Heart left ventricle (tissue), 16 donors: ENCODE measurements at regions of chr5 and their contacts with region 1.

Region 1: DNA sequence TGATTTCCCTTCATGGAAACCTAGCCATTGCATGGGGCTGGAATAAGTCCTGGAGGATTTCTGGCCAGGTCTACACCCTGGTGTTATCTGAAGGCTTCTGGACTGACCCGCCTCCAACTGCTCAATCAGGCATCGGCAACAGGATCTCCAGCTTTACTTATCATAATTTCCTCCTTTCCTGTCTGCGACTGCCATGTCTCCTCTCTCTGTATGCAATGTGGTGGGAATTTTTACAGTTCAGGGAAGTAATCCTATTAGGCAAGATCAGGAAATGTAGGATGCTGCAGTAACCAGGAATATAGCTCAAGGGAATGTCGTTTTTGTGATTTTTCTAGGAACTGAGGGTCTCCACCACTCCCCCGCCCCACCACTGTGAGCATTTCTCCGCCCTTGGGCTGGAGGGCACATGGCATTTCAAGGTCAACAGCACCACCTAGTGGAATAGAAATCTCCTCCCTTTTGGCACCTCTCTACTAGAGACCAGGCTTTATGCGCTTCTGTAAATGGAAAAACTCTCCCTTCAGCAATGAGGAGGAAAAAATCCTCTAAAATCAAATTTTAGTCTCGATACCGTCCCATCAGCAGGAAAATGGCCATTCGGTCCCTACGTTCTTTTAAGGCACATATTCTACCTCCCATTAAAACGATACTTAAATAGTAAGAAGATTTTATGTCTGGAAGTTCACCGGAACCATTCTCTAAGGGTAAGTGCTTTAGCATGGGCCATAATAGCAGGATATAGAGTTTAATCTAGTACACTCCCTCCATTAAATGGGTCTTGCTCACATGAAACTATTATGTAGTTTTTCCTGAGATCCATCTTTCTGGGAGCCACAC is 93.0 kb downstream of the YTHDC2 start:
- DNase-seq: peak in 4 of 5 donors; percentile 30 to 63 (median 46)
- ATAC-seq: peak; percentile 83 to 93 (median 90)
- H3K4me3 ChIP-seq: peak overlapping the region in 6 of 12 donors; percentile 7 to 35 (median 23)
- H3K27ac ChIP-seq: no peak overlapping the region
- H3K4me1 ChIP-seq: peaks cover 0 to 11% (median 2%) of the 10 kb centered on the region in 12 donors
- H3K27me3 ChIP-seq: peaks cover 0 to 3% (median 0%) of the 10 kb centered on the region in 9 donors
- CTCF ChIP-seq: peak; percentile 63 to 84 (median 75)
- POLR2A ChIP-seq: no peak

Region 2: DNA sequence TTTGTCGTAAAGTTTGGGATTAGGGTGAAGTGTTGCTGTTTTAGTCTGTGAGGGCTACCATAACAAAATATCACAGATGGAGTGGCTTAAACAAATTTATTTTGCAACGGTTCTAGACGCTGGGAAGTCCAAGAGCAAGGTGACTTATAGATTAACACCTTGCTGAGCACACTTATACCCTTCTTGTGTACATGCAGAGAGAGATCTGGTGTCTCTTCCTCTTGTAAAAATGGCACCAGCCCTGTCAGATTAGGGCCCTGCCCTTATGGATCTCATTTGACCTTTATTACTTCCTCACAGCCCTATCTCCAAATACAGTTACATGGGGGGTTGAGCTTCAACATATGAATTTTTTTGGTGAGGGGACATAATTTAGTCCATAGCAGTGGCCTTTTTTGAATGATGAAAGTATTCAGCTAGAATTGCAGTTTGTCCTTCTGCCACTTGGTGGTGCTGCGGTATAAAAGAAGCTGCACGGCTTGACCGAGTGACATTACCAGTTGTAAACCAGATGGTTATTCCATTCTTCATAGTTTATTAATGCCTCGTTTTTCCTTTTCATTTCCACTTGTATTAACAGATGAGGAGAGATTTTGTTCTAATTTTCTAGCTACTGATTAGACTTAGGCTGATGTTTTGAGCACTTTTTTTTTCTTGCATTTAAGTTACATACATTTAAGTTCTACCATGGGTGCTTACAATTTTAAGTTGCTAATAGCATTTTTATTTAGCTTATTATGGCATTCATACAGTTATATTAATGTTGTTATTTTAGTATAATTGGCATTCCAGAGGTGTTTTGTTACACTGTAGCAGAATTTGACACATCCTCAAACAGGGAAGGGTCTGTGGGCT is 610.5 kb before region 1 on chr5:
- intact Hi-C with region 1: loop called (anchors 2 to 10 kb)
- DNase-seq: peak in 4 of 5 donors; percentile 55 to 69 (median 62)
- ATAC-seq: peak in 3 of 4 donors; percentile 69 to 84 (median 84)
- H3K4me3 ChIP-seq: no peak overlapping the region
- H3K27ac ChIP-seq: no peak overlapping the region
- H3K4me1 ChIP-seq: peaks cover 0 to 14% (median 5%) of the 10 kb centered on the region in 12 donors
- H3K27me3 ChIP-seq: no peaks in the 10 kb centered on the region
- CTCF ChIP-seq: peak; percentile 84 to 96 (median 92)
- POLR2A ChIP-seq: no peak

Region 3: GRCh38 chr5:113005454-113005853 is 601.1 kb before region 1 on chr5:
- intact Hi-C with region 1: loop called in 1 of 10 experiments (anchors 10 kb)
- DNase-seq: no peak
- ATAC-seq: no peak
- H3K4me3 ChIP-seq: no peak overlapping the region
- H3K27ac ChIP-seq: no peak overlapping the region
- H3K4me1 ChIP-seq: no peaks in the 10 kb centered on the region
- H3K27me3 ChIP-seq: no peaks in the 10 kb centered on the region
- CTCF ChIP-seq: no peak
- POLR2A ChIP-seq: no peak

Region 4: DNA sequence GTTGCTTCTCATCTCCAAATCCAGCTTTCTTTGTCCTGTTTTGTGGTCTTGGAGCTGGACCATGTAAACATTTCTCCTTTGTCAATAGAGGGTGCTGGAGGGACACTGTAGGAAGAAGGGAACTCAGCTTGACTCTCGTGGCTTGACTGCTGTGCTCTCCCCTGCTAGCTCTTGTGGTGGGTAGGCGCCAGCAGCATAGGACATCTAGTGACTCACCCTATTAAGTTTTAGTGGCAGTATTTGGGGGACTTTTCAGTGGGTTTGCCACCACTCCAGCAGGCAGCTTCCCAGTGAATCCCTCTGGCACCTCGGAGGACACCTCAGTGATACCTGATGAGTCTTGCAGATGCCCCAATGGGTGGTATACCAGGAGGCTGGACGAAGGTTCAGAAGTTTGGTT is 269.5 kb before region 1 on chr5:
- intact Hi-C with region 1: loop called in 9 of 10 experiments (anchors 2 to 10 kb)
- DNase-seq: peak in 4 of 5 donors; percentile 39 to 53 (median 40)
- ATAC-seq: peak; percentile 72 to 93 (median 89)
- H3K4me3 ChIP-seq: no peak overlapping the region
- H3K27ac ChIP-seq: no peak overlapping the region
- H3K4me1 ChIP-seq: peaks cover 0 to 15% (median 0%) of the 10 kb centered on the region in 12 donors
- H3K27me3 ChIP-seq: no peaks in the 10 kb centered on the region
- CTCF ChIP-seq: peak; percentile 33 to 70 (median 50)
- POLR2A ChIP-seq: no peak

Region 5: DNA sequence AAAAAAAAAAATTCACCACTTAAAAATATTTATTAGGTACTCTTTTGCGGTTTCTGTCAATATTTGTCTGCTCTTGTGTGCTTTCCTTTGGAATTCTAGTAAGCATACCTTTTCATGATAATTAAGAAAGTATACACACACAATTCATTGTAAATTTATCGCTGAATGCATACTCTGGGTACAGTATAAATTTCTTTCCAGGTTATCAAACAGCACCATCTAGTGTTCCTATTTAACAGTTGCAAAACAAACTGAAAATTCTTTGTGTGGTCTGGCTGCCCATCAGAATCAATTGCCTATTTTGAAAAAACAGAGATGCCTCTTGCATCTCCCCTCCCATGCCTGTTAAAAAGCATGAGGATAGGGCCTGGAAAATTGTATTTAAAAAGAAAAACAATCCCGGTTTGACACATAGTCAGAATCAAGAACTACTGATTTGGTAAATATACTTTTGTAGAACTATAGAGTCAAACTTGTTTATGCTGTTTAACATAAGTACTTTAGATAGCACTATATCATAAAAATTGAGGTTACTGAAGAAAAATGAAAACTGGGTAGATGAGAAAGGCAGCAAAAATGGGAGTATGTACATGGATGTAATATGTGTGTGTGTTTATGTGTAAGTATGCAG is 1640.0 kb after region 1 on chr5:
- intact Hi-C with region 1: loop called in 2 of 10 experiments (anchors 10 kb)
- DNase-seq: no peak
- ATAC-seq: peak in 1 of 4 donors; percentile 55
- H3K4me3 ChIP-seq: no peak overlapping the region
- H3K27ac ChIP-seq: no peak overlapping the region
- H3K4me1 ChIP-seq: peaks cover 0 to 27% (median 11%) of the 10 kb centered on the region in 12 donors
- H3K27me3 ChIP-seq: no peaks in the 10 kb centered on the region
- CTCF ChIP-seq: peak; percentile 59 to 80 (median 68)
- POLR2A ChIP-seq: no peak